ENCODE measurements at regions of chr14 and their contacts with region 1.

Region 1: GRCh38 chr14:95561001-95561412 is 26.2 kb downstream of the GLRX5 start:
- DNase-seq: peak; percentile 94
- H3K4me3 ChIP-seq: no peak overlapping the region
- H3K27ac ChIP-seq: no peak overlapping the region
- H3K4me1 ChIP-seq: peaks cover 0 to 22% (median 3%) of the 10 kb centered on the region in 6 donors
- H3K27me3 ChIP-seq: peaks cover 0 to 12% (median 0%) of the 10 kb centered on the region in 7 donors
- CTCF ChIP-seq: peak; percentile 91 to 97 (median 94)
- POLR2A ChIP-seq: no peak

Region 2: GRCh38 chr14:95527387-95528002 is 33.5 kb before region 1 on chr14:
- intact Hi-C with region 1: no loop called
- DNase-seq: no peak
- H3K4me3 ChIP-seq: no peak overlapping the region
- H3K27ac ChIP-seq: peak overlapping the region in 3 of 8 donors; percentile 21 to 59 (median 36)
- H3K4me1 ChIP-seq: peaks cover 23 to 75% (median 58%) of the 10 kb centered on the region in 6 donors
- H3K27me3 ChIP-seq: no peaks in the 10 kb centered on the region
- CTCF ChIP-seq: peak; percentile 64 to 86 (median 82)
- POLR2A ChIP-seq: no peak

Region 3: GRCh38 chr14:95774265-95775160 is 213.5 kb after region 1 on chr14:
- intact Hi-C with region 1: loop called (anchors 2 kb)
- DNase-seq: no peak
- H3K4me3 ChIP-seq: no peak overlapping the region
- H3K27ac ChIP-seq: no peak overlapping the region
- H3K4me1 ChIP-seq: no peaks in the 10 kb centered on the region
- H3K27me3 ChIP-seq: peaks cover 0 to 15% (median 0%) of the 10 kb centered on the region in 7 donors
- CTCF ChIP-seq: peak; percentile 78 to 87 (median 83)
- POLR2A ChIP-seq: no peak

Region 4: DNA sequence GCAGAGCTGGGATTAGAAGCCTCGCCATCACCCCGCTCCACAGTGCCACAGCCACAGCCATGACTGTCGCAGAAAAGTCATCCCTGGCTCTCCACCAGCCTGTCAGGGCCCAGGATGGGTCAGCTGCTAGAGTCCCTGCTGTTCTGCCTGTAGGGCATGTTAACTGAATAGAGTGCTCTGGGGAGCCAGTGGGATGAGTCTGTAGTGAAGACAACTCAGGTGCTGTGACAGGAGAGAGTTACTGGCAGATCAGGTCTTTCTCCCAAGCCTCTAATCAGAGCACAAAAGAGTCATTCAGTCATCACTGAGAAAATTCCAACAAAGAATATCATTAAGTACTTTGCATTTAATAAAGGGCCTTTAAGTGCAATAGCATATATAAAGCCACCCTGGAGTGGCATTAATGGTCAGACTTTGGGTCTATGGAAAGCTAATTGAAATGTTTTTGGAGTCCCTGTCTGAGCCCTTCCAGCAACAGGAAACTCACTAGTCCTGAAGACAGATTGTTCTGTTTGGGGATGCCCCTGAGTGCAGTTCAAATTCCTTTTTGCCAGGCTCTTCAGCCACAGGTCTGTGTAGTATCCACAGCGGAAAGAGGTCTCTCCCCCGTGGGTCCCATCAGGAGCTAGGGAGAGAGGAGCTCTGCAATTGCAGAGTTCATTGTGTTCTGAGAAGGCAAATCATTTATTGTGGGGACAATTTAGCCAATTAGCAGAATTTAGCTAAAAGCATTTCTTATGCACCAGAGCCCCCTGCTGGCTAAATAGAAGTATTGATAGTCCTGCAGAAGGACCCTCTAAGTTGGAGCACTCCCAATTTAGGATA is 433.0 kb after region 1 on chr14:
- intact Hi-C with region 1: loop called (anchors 2 kb)
- DNase-seq: no peak
- H3K4me3 ChIP-seq: no peak overlapping the region
- H3K27ac ChIP-seq: no peak overlapping the region
- H3K4me1 ChIP-seq: no peaks in the 10 kb centered on the region
- H3K27me3 ChIP-seq: peaks cover 0 to 42% (median 8%) of the 10 kb centered on the region in 7 donors
- CTCF ChIP-seq: peak; percentile 49 to 83 (median 71)
- POLR2A ChIP-seq: no peak

Region 5: GRCh38 chr14:96275177-96276112 is 714.4 kb after region 1 on chr14:
- intact Hi-C with region 1: loop called (anchors 10 kb)
- DNase-seq: peak; percentile 88
- H3K4me3 ChIP-seq: no peak overlapping the region
- H3K27ac ChIP-seq: no peak overlapping the region
- H3K4me1 ChIP-seq: peaks cover 0 to 12% (median 8%) of the 10 kb centered on the region in 6 donors
- H3K27me3 ChIP-seq: no peaks in the 10 kb centered on the region
- CTCF ChIP-seq: peak; percentile 50 to 91 (median 83)
- POLR2A ChIP-seq: no peak

Measured in spleen (tissue), 13 donors.